Activated CD4-positive, alpha-beta T cell treated with anti-CD3 and anti-CD28 coated beads, Interleukin-2, amount 10 ng/mL, durations not matched to agents 24 days and 14 days (primary cell): ENCODE measurements at regions of chr19 and their contacts with region 1.

Region 1: GRCh38 chr19:4246767-4247593 is at the start of gene YJU2:
- DNase-seq: peak; percentile 100
- H3K4me3 Mint-ChIP-seq: peak within 1 kb of the TSS; percentile 87
- H3K27ac Mint-ChIP-seq: peak within 1 kb of the TSS; percentile 96
- H3K4me1 Mint-ChIP-seq: peaks cover 14% of the 10 kb centered on the region
- H3K27me3 Mint-ChIP-seq: no peaks in the 10 kb centered on the region
- total RNA-seq, gene YJU2: 35.5 and 38.2 TPM in 2 replicates

Region 2: DNA sequence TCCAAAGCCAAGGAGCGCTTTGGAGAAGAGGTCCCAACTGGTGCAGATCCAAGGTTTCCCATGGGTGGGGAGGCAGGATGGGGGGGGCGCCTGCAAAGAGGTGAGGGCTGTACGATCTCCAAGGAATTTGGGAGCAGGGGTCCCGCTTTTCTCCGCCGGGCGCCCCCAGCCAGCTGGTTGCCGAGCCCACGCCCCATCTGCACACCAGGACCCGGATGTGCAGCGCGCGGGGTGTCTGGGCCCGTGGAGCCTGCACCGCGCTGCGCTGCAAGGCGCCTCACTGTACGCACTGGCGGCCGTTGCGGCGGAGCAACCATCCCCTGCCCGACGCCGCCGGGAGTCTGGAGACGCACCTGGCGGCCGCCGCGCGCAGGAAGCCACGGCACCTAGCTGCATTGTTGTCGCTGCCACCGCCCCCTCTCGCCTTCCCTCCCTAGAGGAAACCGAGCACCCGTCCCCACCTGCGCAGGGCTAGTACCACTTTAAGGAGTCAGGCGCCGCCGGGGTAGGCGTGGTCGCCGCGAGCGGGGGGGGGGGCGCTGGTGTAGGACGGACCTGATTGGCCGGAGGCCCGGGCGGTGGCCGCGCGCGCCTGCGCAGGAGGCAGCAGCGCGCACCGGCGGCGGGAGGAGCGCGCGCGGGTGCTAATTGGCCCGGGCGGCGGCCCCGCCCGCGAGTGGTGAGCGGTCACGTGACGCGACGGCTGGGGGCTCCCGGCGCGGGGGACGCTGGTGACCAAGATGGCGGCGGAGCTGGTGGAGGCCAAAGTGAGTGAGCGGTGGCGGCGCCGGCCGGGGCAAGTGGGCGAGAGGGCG is 239.8 kb before region 1 on chr19 and contains the start of gene PIAS4:
- intact Hi-C with region 1: loop called (anchors 5 kb)
- DNase-seq: peak; percentile 98
- H3K4me3 Mint-ChIP-seq: peak within 1 kb of the TSS; percentile 90
- H3K27ac Mint-ChIP-seq: peak within 1 kb of the TSS; percentile 90
- H3K4me1 Mint-ChIP-seq: peaks cover 16% of the 10 kb centered on the region
- H3K27me3 Mint-ChIP-seq: no peaks in the 10 kb centered on the region
- total RNA-seq, gene PIAS4: 32.2 and 33.2 TPM in 2 replicates

Region 3: GRCh38 chr19:4229179-4229931 is 17.6 kb before region 1 on chr19 and contains the start of gene EBI3:
- intact Hi-C with region 1: loop called (anchors 1 kb)
- DNase-seq: peak; percentile 83
- H3K4me3 Mint-ChIP-seq: no peak within 1 kb of the TSS
- H3K27ac Mint-ChIP-seq: no peak within 1 kb of the TSS
- H3K4me1 Mint-ChIP-seq: peaks cover 15% of the 10 kb centered on the region
- H3K27me3 Mint-ChIP-seq: no peaks in the 10 kb centered on the region
- total RNA-seq, gene EBI3: 44.0 and 45.0 TPM in 2 replicates

Region 4: GRCh38 chr19:4342615-4343369 is 95.8 kb after region 1 on chr19:
- intact Hi-C with region 1: loop called (anchors 2 kb)
- DNase-seq: peak; percentile 98
- H3K4me3 Mint-ChIP-seq: peak overlapping the region; percentile 93
- H3K27ac Mint-ChIP-seq: peak overlapping the region; percentile 95
- H3K4me1 Mint-ChIP-seq: peaks cover 20% of the 10 kb centered on the region
- H3K27me3 Mint-ChIP-seq: no peaks in the 10 kb centered on the region

Region 5: GRCh38 chr19:4457654-4458395 is 210.8 kb after region 1 on chr19 and contains the start of gene UBXN6:
- intact Hi-C with region 1: loop called (anchors 2 kb)
- DNase-seq: peak; percentile 100
- H3K4me3 Mint-ChIP-seq: peak within 1 kb of the TSS; percentile 96
- H3K27ac Mint-ChIP-seq: peak within 1 kb of the TSS; percentile 92
- H3K4me1 Mint-ChIP-seq: peaks cover 16% of the 10 kb centered on the region
- H3K27me3 Mint-ChIP-seq: peaks cover 2% of the 10 kb centered on the region
- total RNA-seq, gene UBXN6: 41.2 and 47.2 TPM in 2 replicates